ENCODE measurements at regions of chr16 and their contacts with region 1.

Region 1: GRCh38 chr16:54812229-54812628 is 118.4 kb upstream of the IRX5 start:
- DNase-seq: no peak
- ATAC-seq: no peak

Region 2: GRCh38 chr16:53945996-53946395 is 866.2 kb before region 1 on chr16:
- intact Hi-C with region 1: loop called (anchors 5 kb)
- DNase-seq: no peak
- ATAC-seq: peak; percentile 63

Region 3: DNA sequence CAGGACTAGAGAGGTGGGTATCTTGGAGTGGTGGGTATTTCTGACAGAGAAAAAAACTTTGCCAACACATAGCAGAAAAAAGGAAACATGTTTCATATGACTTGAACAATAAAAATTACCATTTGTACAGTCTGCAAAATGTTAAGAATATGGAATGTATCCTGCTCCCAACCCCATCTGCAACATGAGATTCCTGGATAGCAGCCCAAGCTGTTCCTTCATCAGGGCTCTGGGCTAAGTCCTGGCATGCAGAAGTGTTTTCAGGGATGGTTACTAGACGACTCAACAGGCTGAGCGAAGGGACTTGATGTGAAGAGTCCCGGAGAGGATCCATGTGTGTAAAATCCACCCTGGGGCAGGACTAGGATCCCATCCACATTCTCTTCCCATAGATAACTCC is 404.6 kb before region 1 on chr16:
- intact Hi-C with region 1: loop called (anchors 10 kb)
- DNase-seq: no peak
- ATAC-seq: no peak